AG04450 (cell line): ENCODE measurements at regions of chr2 and their contacts with region 1.

Region 1: GRCh38 chr2:209334198-209335017 is 89.4 kb upstream of the MAP2 start:
- DNase-seq: peak; percentile 13
- H3K4me3 ChIP-seq: no peak overlapping the region
- H3K27ac ChIP-seq: no peak overlapping the region
- H3K27me3 ChIP-seq: no peaks in the 10 kb centered on the region
- CTCF ChIP-seq: peak; percentile 93

Region 2: GRCh38 chr2:209259767-209260166 is 74.6 kb before region 1 on chr2:
- CTCF ChIA-PET with region 1: no interaction called
- POLR2A ChIA-PET with region 1: no interaction called
- DNase-seq: no peak
- H3K4me3 ChIP-seq: no peak overlapping the region
- H3K27ac ChIP-seq: no peak overlapping the region
- H3K27me3 ChIP-seq: no peaks in the 10 kb centered on the region
- CTCF ChIP-seq: no peak

Region 3: GRCh38 chr2:209308415-209308814 is 26.0 kb before region 1 on chr2:
- CTCF ChIA-PET with region 1: interaction called, 10 read pairs
- POLR2A ChIA-PET with region 1: no interaction called
- DNase-seq: no peak
- H3K4me3 ChIP-seq: no peak overlapping the region
- H3K27ac ChIP-seq: no peak overlapping the region
- H3K27me3 ChIP-seq: no peaks in the 10 kb centered on the region
- CTCF ChIP-seq: no peak

Region 4: DNA sequence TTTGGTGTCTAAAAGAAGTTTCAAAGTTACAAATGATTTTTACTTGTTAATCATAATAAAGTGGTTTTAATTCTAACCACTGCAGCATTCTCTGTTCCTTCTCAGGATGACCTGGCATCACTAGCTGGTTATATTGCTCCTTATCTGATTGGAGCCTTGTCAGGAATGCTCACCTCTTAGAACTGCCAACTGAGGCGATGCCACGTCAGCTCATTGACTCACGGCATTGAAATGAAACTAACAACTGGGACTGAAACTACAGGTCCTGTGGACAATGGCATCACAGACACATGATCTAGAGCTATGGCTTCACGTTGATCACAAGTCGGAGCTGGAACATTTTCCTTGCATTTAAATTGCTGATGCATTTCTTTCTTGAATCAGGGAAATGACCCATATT is 34.5 kb after region 1 on chr2:
- CTCF ChIA-PET with region 1: interaction called, 19 read pairs
- POLR2A ChIA-PET with region 1: no interaction called
- DNase-seq: peak; percentile 20
- H3K4me3 ChIP-seq: no peak overlapping the region; the same call in 1 of the 2 replicates
- H3K27ac ChIP-seq: no peak overlapping the region
- H3K27me3 ChIP-seq: no peaks in the 10 kb centered on the region
- CTCF ChIP-seq: no peak

Region 5: DNA sequence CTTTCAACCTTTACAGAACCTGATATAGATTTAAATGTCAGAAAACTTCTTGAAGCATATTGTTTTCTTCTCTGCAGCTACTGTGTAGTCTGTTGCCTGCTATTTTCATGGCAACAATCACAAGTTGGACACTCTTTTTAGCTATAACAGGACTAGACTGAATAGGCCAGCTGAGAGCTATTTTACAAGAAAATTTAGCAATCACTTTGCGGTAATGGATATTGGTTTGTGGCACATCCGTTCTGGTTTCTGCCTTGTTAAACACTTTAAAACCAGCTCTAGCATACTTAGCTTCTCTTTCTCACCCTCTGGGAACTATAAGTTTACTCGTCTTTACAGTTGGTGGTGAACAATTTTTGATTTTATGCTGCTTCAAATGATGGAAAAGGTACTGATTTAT is 215.2 kb after region 1 on chr2:
- CTCF ChIA-PET with region 1: interaction called, 103 read pairs
- POLR2A ChIA-PET with region 1: no interaction called
- DNase-seq: no peak
- H3K4me3 ChIP-seq: no peak overlapping the region
- H3K27ac ChIP-seq: no peak overlapping the region
- H3K27me3 ChIP-seq: no peaks in the 10 kb centered on the region
- CTCF ChIP-seq: no peak

Region 6: GRCh38 chr2:209577376-209578357 is 243.3 kb after region 1 on chr2:
- CTCF ChIA-PET with region 1: interaction called, 143 read pairs
- POLR2A ChIA-PET with region 1: no interaction called
- DNase-seq: no peak
- H3K4me3 ChIP-seq: no peak overlapping the region
- H3K27ac ChIP-seq: no peak overlapping the region
- H3K27me3 ChIP-seq: no peaks in the 10 kb centered on the region
- CTCF ChIP-seq: peak; percentile 38

Region 7: DNA sequence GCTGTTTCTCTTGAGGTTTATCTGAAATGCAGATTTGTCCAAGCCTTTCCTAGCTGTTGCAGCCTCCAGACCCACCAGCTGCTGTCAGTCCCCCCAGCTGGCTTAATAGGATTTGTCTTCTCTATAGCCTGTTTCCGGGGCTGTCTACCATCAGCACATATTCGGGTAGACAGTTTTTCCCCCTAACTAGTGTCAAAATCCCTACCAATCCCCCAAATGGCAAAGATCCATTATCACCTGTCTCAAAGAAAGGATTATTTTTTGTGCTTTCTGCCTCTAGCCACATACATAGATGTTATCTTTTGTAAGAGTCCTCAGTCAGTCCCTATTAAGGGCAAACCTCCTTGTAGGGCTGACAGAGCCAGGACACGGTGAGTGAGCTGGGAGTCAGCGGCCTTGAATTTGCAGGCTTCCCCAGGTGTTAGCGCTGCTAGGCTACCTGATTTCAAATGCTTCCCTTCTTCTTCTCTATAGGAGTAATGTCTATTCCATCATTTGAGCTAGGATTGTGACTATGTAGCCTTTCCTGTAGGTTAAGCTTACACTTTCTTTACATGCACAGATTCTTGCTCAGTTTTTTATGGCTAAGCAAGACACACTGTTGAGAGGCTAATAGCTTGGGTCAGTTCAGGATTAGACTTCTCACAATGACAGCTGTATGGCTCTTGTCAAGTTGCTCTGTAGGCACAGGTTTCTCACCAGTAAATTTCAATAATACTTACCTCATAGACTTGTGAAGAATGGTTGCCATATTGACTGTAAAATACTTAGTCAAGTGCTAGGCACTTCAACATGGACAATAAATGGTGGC is 266.2 kb after region 1 on chr2:
- CTCF ChIA-PET with region 1: no interaction called
- POLR2A ChIA-PET with region 1: no interaction called
- DNase-seq: no peak
- H3K4me3 ChIP-seq: no peak overlapping the region
- H3K27ac ChIP-seq: no peak overlapping the region
- H3K27me3 ChIP-seq: peaks cover 5% of the 10 kb centered on the region
- CTCF ChIP-seq: no peak